ENCODE measurements at regions of chr4 and their contacts with region 1.

Region 1: GRCh38 chr4:1746265-1746691 is 25.0 kb downstream of the TACC3 start:
- DNase-seq: peak in 1 of 2 donors; percentile 76
- H3K4me3 ChIP-seq: no peak overlapping the region
- H3K27ac ChIP-seq: no peak overlapping the region
- H3K4me1 ChIP-seq: peaks cover 0 to 2% of the 10 kb centered on the region in 2 donors
- H3K27me3 ChIP-seq: no peaks in the 10 kb centered on the region
- CTCF ChIP-seq: peak; percentile 52 to 67 (median 58)

Region 2: DNA sequence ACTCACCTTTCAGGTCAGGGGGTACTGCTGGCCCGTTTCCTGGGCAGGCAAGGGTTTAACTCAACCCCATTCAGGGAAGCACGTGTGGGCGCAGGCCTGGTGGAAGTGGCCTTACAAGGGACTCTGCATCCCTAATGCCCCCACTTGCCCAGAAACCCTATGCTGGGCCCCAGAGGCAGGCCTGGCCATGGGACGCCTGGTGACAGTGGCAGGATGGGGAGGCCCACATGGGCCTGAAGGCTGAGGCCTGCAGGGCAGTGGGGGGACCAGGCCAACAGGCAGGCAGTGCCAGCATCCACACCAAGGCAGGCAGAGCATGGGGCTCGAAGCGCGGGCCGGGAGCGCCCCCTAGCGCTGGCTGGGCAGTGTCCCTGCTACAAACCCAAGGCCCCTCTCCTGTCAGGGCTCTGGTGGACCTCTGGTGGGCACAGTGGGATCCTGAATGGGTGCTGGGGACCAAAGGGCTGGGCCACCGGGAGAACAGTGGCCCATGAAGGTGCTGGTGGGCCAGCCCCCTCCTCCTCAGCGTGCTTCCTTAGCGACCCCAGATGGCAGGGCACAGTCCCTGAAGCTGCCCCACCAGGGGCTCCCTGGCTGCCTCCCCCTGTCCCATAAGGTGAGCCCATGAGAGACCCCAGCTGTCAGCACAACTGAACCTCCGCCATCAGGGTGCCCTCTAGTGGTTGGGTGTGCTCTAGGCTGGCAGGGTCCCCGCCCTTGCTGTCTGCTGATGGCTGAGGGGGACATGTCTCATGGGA is 63.7 kb after region 1 on chr4:
- intact Hi-C with region 1: loop called (anchors 5 kb)
- DNase-seq: no peak
- H3K4me3 ChIP-seq: no peak overlapping the region
- H3K27ac ChIP-seq: no peak overlapping the region
- H3K4me1 ChIP-seq: no peaks in the 10 kb centered on the region
- H3K27me3 ChIP-seq: no peaks in the 10 kb centered on the region
- CTCF ChIP-seq: peak; percentile 38 to 69 (median 51)

Region 3: DNA sequence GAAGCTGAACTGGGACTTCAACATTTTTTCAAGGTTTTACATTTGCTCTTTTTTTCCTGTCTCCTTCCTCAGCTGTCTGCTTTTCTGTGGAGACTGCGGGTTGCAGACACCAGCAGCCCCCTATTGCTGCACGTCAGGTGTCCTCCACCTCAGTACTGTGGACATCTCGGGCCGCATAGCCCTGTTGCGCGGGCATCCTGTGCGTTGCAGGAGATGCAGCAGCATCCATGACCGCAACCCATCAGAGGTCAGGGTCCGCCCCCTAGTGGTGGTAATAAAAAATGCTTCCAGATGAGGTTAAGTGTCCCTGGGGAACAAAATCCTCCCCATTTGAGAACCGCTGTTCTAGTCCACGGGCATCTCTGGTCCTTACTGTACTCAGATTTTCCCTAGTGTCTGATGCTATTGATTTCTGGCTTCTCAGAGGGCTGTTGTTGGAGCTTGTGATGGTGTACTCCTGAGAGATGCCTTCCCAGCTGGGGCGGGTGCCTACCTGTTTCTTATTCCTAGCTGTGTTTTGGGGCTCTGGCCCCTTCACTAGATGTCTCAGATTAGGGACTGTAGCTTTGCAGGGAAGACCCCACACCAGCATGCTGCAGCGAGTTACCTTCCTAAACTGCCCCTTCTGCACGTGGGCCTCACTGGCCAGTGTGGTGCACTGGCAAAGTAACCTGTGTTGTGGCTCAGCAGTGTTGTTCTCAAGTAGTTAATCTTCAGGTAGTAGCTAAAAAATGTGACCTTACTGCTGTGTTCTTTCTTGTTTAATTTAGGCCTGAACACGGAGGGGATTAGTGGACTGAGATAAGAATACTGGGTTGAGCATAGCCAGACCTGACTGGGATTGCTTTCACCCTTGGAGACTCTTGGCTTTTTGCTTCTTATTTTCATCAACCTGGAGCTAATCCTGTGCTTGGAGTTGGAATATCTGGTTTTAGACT is 153.1 kb after region 1 on chr4:
- intact Hi-C with region 1: loop called (anchors 2 kb)
- DNase-seq: peak; percentile 13 to 84
- H3K4me3 ChIP-seq: no peak overlapping the region
- H3K27ac ChIP-seq: no peak overlapping the region
- H3K4me1 ChIP-seq: no peaks in the 10 kb centered on the region
- H3K27me3 ChIP-seq: no peaks in the 10 kb centered on the region
- CTCF ChIP-seq: peak; percentile 72 to 87 (median 80)